Aorta (tissue), 5 donors: ENCODE measurements at regions of chr17 and their contacts with region 1.

Region 1: DNA sequence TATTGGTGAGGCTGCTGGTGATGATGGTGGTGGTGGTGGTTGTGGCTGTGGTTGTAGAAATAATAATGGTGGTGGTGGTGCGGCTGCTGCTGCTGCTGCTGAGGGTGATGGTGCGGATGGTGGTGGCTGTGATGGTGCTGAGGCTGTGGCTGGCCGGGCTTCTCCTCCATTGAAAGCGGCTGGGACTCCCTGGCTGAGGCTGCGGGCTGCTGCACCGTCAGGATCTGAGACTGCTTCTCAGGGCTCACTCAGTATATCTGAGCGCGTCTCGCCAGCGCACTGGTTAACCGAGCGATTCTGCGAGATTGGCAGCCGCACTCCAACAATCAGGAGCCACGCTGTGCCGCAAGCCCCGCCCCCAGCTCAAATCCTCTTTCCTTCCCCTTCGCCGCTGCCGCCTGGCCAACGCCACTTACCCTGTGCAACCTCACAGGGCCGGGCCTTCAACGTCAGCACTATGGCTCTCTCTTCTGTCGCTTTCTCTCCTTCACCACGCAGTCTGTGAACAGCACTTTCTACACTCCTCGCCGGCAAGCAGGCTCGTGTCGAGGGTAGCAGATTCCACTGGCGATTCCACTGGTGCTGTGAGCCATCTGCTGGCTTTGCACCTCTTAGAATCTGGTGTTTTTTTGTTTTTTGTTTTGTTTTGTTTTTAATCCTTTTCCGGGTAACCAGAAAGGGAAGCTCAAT is at the start of gene NUFIP2:
- DNase-seq: peak; percentile 99 to 100
- ATAC-seq: peak; percentile 98
- H3K4me3 ChIP-seq: peak within 1 kb of the TSS; percentile 98 to 100
- H3K27ac ChIP-seq: peak within 1 kb of the TSS; percentile 57 to 94
- H3K4me1 ChIP-seq: no peaks in the 10 kb centered on the region
- H3K27me3 ChIP-seq: peaks cover 0 to 1% of the 10 kb centered on the region in 2 donors
- total RNA-seq, gene NUFIP2: 51.3 to 52.9 TPM

Region 2: DNA sequence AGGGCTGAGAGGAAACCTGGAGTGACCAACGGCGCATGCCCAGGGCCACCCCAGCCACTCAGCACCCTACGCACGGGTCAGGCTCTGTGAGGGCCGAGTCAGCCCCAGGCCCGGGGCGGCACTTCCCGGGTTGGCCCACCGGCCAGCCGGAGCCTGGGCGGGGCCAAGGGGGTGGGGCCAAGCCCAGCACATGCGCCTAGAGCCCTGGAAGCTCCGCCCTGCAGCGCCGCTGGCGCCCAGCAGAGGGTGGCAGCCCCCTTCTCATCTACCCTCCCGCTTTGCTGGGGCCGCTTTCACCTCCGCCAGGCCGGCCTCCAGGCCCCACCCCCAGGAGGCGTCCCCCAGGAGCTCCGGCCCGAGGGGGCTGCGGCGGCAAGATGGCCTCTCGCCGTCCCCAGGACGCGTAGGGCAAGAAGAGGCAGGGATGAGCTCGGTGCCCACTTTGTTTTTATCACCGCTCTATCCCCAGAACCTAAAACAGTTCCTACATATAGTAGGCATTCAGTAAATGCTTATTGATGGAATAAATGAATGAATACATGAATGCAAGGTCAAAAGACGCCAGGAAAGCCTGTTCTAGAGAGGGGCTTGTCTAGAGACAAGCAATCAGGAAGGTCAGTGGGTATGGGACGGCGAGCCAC is 145.1 kb before region 1 on chr17:
- intact Hi-C with region 1: loop called (anchors 2 to 5 kb)
- DNase-seq: peak; percentile 97 to 98
- ATAC-seq: peak; percentile 99
- H3K4me3 ChIP-seq: peak overlapping the region in 1 of 2 donors; percentile 37
- H3K27ac ChIP-seq: peak overlapping the region in 1 of 2 donors; percentile 65
- H3K4me1 ChIP-seq: no peaks in the 10 kb centered on the region
- H3K27me3 ChIP-seq: no peaks in the 10 kb centered on the region

Region 3: GRCh38 chr17:29219378-29220047 is 74.5 kb before region 1 on chr17:
- intact Hi-C with region 1: loop called (anchors 2 to 5 kb)
- DNase-seq: peak; percentile 84 to 88
- ATAC-seq: peak; percentile 91
- H3K4me3 ChIP-seq: no peak overlapping the region
- H3K27ac ChIP-seq: no peak overlapping the region
- H3K4me1 ChIP-seq: no peaks in the 10 kb centered on the region
- H3K27me3 ChIP-seq: no peaks in the 10 kb centered on the region

Region 4: DNA sequence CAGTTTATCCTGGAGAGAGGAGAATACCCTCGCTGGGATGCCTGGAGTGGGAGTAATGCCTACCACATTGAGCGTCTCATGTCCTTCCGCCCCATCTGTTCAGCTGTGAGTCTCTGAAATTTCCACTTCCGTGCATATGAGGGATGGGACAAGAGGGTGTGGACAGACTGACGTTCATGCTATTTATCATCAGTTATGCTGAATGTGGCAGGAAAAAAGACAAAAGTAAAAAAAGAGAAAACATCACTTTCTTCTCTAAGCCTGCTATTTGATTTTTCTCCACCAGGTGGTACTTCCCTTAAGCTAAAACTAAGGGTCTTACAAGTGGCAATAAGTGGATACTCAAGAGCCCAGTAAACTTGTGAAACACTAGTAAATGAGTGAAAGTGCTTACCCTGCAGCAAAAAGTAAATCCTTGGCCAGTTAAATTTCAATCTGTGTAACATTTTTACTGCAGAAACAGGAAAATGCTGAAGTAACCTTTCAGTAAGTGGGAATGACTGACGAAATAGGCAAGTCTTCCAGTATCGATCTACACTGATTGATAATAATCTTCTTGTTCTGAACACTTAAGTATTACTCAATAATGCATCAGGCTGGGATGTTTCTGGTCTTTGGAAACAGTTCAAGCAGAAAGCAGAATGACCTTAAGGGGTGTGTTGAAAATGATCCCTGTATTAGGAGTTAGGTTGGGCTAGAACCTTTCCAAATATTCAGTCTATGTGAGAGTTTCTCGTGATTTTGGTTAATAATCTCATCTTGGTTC is 41.8 kb before region 1 on chr17:
- intact Hi-C with region 1: loop called (anchors 5 kb)
- DNase-seq: no peak
- ATAC-seq: no peak
- H3K4me3 ChIP-seq: no peak overlapping the region
- H3K27ac ChIP-seq: peak overlapping the region; percentile 9 to 71
- H3K4me1 ChIP-seq: peaks cover 2 to 4% of the 10 kb centered on the region in 2 donors
- H3K27me3 ChIP-seq: no peaks in the 10 kb centered on the region